ENCODE measurements at regions of chr17 and their contacts with region 1.

Region 1: GRCh38 chr17:80226762-80227555 is 6.7 kb downstream of the SLC26A11 start:
- DNase-seq: no peak
- H3K4me3 ChIP-seq: no peak overlapping the region
- H3K27ac ChIP-seq: no peak overlapping the region
- H3K4me1 ChIP-seq: peaks cover 0 to 16% (median 6%) of the 10 kb centered on the region in 4 experiments; a peak in 6 of 7 replicates
- H3K27me3 ChIP-seq: no peaks in the 10 kb centered on the region
- CTCF ChIP-seq: no peak
- EP300 ChIP-seq: no peak
- POLR2A ChIP-seq: no peak
- RAD21 ChIP-seq: no peak

Region 2: DNA sequence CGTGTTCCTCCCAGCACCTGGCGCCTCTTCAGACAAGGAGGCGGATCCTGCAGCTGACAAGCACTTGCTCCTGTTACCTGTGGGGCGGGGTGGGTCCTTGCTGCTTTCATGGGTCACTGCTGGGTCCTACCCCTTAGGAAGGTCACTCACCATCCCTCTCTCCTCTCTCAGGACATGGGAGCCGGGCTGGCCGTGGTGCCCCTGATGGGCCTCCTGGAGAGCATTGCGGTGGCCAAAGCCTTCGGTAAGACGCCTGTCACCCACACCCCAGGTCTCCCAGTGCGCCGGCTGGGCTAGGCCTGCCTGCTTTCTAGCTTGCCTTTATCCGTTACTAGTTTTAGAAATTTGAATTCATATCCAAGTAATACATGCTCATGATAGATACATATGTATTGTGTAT is 10.4 kb after region 1 on chr17:
- CTCF ChIA-PET with region 1: interaction called, 20 read pairs
- POLR2A ChIA-PET with region 1: interaction called, 7 read pairs
- DNase-seq: no peak
- H3K4me3 ChIP-seq: no peak overlapping the region
- H3K27ac ChIP-seq: no peak overlapping the region
- H3K4me1 ChIP-seq: no peaks in the 10 kb centered on the region
- H3K27me3 ChIP-seq: no peaks in the 10 kb centered on the region
- CTCF ChIP-seq: no peak
- EP300 ChIP-seq: no peak
- POLR2A ChIP-seq: no peak
- RAD21 ChIP-seq: no peak

Region 3: DNA sequence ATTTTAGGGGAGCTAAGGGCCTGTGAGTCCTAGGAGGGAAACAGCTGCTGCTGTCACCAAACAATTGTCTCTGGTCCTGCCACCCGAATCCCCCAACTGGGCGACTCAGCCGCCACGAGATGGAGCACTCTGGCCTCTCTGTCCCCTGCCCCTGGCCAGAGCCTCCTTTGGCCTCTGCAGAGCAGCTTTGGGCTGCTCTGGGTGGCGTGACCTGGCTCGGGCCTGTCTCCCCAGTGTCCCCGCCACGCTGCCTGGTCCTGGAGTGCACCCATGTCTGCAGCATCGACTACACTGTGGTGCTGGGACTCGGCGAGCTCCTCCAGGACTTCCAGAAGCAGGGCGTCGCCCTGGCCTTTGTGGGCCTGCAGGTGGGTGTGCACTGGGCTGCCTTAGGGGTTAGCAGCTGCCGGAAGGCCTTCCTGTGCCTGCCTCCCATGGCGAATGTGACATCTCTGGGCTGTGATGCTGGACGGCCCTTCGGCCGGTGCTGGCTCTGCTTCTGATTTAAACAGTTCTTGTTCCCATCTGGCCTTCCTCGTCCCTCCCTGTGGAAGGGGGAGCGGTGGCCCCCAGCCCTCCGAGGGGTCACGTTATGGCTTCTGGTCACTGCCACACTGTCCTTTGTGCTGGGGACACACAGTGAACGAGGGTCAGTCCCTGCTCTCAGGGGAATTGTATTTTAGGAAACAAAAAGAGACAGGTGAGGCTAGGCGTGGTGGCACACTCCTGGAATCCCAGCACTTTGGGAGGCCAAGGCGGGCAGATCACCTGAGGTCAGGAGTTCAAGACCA is 22.2 kb after region 1 on chr17:
- CTCF ChIA-PET with region 1: interaction called, 10 read pairs
- POLR2A ChIA-PET with region 1: interaction called, 3 read pairs
- DNase-seq: no peak
- H3K4me3 ChIP-seq: no peak overlapping the region
- H3K27ac ChIP-seq: no peak overlapping the region
- H3K4me1 ChIP-seq: peaks cover 0 to 5% (median 0%) of the 10 kb centered on the region in 4 experiments; a peak in 1 of 7 replicates
- H3K27me3 ChIP-seq: no peaks in the 10 kb centered on the region
- CTCF ChIP-seq: no peak
- EP300 ChIP-seq: no peak
- POLR2A ChIP-seq: no peak
- RAD21 ChIP-seq: no peak

Region 4: DNA sequence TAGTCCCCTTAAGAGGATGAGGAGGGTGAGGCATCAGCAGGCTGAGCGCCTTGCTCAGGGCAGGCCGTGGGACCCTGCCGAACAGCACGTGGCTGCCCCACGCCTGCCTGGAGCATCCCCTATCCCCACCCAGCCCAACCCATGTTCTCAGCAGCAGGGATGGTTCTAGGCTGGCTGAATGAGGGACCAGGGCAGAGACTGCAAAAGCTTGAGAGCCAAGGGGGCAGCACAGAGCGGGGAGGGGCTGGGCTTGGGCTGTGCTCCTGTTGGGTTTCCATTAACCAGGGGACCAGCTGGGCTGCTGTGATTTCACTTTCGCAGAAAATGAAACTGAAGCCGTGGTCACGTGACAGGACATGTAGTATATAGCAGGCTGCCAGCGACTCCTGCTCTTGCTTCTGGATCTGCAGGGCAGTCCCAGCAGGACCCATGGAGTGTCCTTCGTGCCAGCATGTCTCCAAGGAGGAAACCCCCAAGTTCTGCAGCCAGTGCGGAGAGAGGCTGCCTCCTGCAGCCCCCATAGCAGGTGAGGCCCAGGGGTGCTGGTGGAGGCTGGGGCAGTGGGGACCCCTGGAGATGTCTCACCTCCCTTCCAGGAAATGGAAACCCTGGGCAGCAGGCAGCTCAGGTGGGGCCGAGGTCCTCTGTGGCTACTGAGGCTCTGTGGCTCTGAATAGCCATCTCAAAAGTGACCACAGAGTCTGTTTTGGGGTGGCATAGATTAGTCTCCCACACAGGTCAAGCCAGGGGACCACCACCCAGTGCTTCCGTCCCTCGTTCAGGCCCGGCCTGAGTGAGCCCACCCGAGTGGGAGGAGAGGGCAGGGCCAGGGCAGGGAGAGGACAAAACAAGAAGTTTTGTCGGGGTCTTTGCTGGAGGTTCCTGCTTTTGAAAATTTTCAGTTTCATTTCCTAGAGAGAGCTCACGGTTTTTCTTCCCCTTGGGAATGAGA is 36.6 kb after region 1 on chr17:
- CTCF ChIA-PET with region 1: interaction called, 4 read pairs
- POLR2A ChIA-PET with region 1: interaction called, 19 read pairs
- DNase-seq: peak in 1 of 2 experiments; percentile 51
- H3K4me3 ChIP-seq: no peak overlapping the region
- H3K27ac ChIP-seq: no peak overlapping the region; the same call in 1 of the 2 replicates
- H3K4me1 ChIP-seq: peaks cover 12 to 20% (median 15%) of the 10 kb centered on the region in 4 experiments
- H3K27me3 ChIP-seq: no peaks in the 10 kb centered on the region
- CTCF ChIP-seq: no peak
- EP300 ChIP-seq: no peak
- POLR2A ChIP-seq: no peak
- RAD21 ChIP-seq: no peak

Region 5: DNA sequence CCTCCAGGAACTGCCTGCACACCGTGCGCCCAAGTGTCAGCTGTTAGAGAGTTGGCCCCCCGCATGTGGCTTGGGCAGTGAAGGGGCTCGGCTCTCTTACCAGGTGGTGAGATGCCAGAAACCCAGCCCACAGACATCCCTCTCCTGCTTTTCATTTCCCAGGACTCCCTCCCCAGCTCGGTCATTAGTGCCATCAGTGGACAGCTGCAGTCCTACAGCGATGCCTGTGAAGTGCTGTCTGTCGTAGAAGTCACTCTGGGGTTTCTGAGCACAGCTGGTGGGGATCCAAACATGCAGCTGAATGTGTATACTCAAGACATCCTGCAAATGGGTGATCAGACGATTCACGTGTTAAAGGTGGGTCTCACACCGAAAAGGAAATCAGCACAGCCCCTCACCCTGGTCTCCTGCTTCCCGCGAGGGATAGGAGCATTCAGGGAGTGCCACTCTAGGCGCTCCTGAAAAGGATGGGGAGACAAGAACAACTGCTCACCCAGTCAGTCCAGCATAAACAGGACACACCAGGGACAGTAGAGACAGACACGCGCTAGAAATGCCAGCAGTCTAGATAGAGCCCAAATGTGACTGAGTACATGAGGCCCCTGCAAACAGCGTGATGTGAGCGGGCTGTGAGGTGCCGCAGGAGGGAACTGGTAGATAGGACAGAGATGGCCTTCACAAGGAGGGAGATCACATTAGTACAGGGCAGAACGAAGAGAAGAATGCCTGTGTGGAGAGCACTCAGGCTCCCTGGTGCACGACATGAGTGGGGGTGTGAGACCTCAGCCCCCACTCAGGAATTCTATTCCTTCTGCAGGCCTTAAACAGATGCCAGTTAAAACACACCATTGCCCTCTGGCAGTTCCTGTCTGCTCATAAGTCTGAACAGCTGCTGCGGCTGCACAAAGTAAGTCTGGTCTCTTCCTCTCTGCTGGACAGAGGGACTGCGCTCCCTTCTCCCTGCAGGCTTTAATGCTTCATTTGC is 162.3 kb after region 1 on chr17:
- CTCF ChIA-PET with region 1: no interaction called
- POLR2A ChIA-PET with region 1: no interaction called
- DNase-seq: no peak
- H3K4me3 ChIP-seq: no peak overlapping the region
- H3K27ac ChIP-seq: no peak overlapping the region
- H3K4me1 ChIP-seq: no peaks in the 10 kb centered on the region
- H3K27me3 ChIP-seq: no peaks in the 10 kb centered on the region
- CTCF ChIP-seq: no peak
- EP300 ChIP-seq: no peak
- POLR2A ChIP-seq: no peak
- RAD21 ChIP-seq: no peak